Caco-2 (cell line): ENCODE measurements at regions of chr2 and their contacts with region 1.

Region 1: GRCh38 chr2:37809525-37809924 is 115.6 kb upstream of the RMDN2 start:
- DNase-seq: peak in 1 of 2 experiments; percentile 21
- H3K4me3 ChIP-seq: no peak overlapping the region
- H3K4me3 Mint-ChIP-seq: no peak overlapping the region
- H3K27ac Mint-ChIP-seq: no peak overlapping the region
- H3K4me1 ChIP-seq: peaks cover 7% of the 10 kb centered on the region
- H3K4me1 Mint-ChIP-seq: peaks cover 20% of the 10 kb centered on the region
- H3K27me3 ChIP-seq: no peaks in the 10 kb centered on the region
- H3K27me3 Mint-ChIP-seq: no peaks in the 10 kb centered on the region
- CTCF ChIP-seq: peak; percentile 36 to 38

Region 2: GRCh38 chr2:37842732-37843440 is 33.4 kb after region 1 on chr2:
- CTCF ChIA-PET with region 1: no interaction called
- POLR2A ChIA-PET with region 1: no interaction called
- intact Hi-C with region 1: loop called (anchors 1 kb)
- DNase-seq: no peak
- H3K4me3 ChIP-seq: no peak overlapping the region
- H3K4me3 Mint-ChIP-seq: no peak overlapping the region
- H3K27ac Mint-ChIP-seq: no peak overlapping the region
- H3K4me1 ChIP-seq: no peaks in the 10 kb centered on the region
- H3K4me1 Mint-ChIP-seq: peaks cover 4% of the 10 kb centered on the region
- H3K27me3 ChIP-seq: no peaks in the 10 kb centered on the region
- H3K27me3 Mint-ChIP-seq: peaks cover 2% of the 10 kb centered on the region
- CTCF ChIP-seq: no peak